PC-3 (cell line): ENCODE measurements at regions of chr7 and their contacts with region 1.

Region 1: DNA sequence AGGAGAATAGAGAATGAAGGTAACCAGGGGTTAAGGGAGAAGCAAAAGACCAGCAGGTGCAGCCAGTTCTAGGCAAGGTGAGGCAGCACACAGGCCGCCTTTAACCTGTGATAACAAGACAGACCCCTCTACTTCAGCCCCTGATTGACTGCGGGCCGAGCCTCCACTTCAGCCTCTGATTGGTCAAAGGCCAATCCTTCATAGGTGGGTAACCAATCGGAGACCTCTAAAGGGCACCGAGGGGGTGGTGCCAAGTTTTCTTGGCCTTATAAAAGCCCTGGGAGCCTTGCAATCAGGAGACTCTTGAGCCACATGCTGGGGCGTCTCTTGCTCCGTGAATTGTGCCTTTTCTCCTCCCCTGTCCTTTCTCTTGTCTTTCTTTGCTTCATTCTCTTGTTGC is 98.8 kb downstream of the ELFN1 start:
- DNase-seq: peak; percentile 25
- ATAC-seq: no peak
- H3K4me3 ChIP-seq: no peak overlapping the region
- H3K27ac ChIP-seq: no peak overlapping the region
- H3K4me1 ChIP-seq: no peaks in the 10 kb centered on the region
- H3K27me3 ChIP-seq: 0 out of 2 replicates have a peak, but pooled peaks cover 3% of the 10 kb centered on the region
- CTCF ChIP-seq: no peak

Region 2: DNA sequence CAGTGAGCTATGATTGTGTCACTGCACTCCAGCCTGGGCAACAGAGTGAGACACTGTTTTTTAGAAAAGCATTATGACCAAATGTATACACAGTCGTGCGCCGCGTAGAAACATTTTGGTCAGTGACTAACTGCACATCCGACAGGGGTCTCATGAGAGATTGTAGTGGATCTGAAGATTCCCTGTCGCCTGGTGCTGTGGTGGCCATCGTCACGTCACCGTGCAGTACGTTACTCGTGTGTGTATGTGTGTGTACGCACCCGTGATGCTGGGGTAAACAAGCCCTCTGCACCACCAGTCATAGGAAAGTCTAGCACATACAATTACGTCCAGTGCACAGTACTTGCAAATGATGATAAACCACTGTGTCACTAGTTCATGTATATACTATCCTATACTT is 10.6 kb after region 1 on chr7:
- CTCF ChIA-PET with region 1: no interaction called
- POLR2A ChIA-PET with region 1: no interaction called
- intact Hi-C with region 1: loop called (anchors 1 kb)
- DNase-seq: no peak
- ATAC-seq: no peak
- H3K4me3 ChIP-seq: no peak overlapping the region
- H3K27ac ChIP-seq: no peak overlapping the region
- H3K4me1 ChIP-seq: no peaks in the 10 kb centered on the region
- H3K27me3 ChIP-seq: peaks cover 19% of the 10 kb centered on the region; the same call in 1 of the 2 replicates
- CTCF ChIP-seq: no peak